ENCODE measurements at regions of chr7 and their contacts with region 1.

Region 1: GRCh38 chr7:47119261-47119865 is 462.5 kb downstream of the TNS3 start:
- DNase-seq: no peak
- H3K4me3 ChIP-seq: no peak overlapping the region
- CTCF ChIP-seq: no peak
- POLR2A ChIP-seq: no peak

Region 2: GRCh38 chr7:46993396-46993795 is 126.0 kb before region 1 on chr7:
- intact Hi-C with region 1: no loop called
- DNase-seq: no peak
- H3K4me3 ChIP-seq: no peak overlapping the region
- CTCF ChIP-seq: no peak
- POLR2A ChIP-seq: no peak

Region 3: DNA sequence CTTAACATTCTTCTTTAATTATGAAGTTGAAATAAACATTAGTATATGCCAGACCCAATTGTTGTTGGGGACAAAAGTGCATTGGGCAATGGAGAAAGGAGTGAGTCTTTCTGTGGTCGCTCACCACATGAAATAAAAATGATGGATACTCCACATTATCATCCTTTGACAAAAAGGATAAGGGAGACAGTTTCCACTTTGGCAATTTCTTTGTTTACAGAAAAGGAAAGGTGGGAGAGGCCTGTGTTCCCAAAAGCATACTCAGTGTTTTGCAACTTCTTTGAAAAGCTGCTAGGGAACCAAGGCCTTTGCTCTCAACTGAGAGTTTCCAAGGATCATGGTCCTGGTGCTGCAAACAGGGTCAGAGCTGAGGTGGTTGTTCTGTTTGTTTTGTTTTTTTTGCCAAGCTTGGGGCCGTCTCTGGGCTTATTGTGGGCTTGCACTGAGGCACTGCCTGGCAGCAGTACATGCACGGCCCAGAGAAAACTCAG is 120.6 kb after region 1 on chr7:
- intact Hi-C with region 1: loop called (anchors 10 kb)
- DNase-seq: peak in 1 of 2 donors; percentile 76
- H3K4me3 ChIP-seq: no peak overlapping the region
- CTCF ChIP-seq: no peak
- POLR2A ChIP-seq: no peak

Measured in lower leg skin (tissue), 4 donors.